Ascending aorta (tissue), 2 donors: ENCODE measurements at regions of chr6 and their contacts with region 1.

Region 1: GRCh38 chr6:150016324-150017185 is 8.8 kb downstream of the RAET1L start:
- DNase-seq: peak in 1 of 2 donors; percentile 69
- H3K4me3 ChIP-seq: no peak overlapping the region
- H3K27ac ChIP-seq: no peak overlapping the region
- H3K4me1 ChIP-seq: no peaks in the 10 kb centered on the region
- H3K27me3 ChIP-seq: peaks cover 16% of the 10 kb centered on the region
- CTCF ChIP-seq: peak; percentile 67 to 78 (median 77)

Region 2: DNA sequence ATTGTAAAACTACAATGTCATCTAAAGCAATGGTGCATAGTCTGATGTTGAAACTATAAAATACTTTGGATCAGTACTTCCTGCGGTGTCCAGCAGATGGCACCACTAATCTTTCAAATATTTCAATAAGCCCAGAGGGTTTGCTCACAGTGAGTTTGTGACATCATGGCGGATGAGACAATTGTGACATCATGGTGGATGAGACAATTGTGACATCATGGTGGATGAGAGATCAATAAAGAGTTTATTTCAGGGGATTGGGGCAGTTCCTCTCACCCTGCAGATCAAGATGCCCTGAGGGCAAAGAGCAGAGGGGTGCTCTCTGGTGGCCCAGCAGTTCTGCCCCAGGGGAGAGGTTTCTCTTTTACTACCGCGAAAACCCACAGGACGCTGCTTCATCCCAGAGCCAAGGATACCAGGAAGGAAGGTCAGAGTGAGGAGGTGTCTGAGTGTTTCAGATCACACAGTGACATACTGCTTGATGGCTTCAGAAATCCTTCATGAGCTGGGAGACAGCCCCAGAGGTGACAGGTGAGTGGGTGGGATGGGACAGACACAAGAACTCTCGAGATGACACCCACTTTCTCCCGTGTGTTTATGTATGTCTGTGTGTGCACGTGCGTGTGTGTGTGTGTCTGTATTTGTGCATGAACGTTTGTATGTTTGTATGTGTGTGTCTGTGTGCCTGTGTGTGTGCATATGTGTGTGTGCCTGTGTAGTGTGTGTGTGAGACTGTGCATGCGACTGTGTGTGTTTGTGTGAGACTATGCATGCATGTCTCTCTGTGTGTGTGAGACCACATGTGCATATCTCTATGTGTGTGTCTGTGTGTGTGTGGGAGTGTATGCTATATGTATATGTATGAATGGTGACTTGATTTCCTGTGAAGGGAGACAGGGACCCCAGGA is 82.1 kb before region 1 on chr6:
- intact Hi-C with region 1: loop called (anchors 1 kb)
- DNase-seq: peak in 1 of 2 donors; percentile 85
- H3K4me3 ChIP-seq: no peak overlapping the region
- H3K27ac ChIP-seq: no peak overlapping the region
- H3K4me1 ChIP-seq: peaks cover 0 to 10% of the 10 kb centered on the region in 2 donors
- H3K27me3 ChIP-seq: peaks cover 19% of the 10 kb centered on the region
- CTCF ChIP-seq: peak; percentile 69 to 77 (median 76)